ENCODE measurements at regions of chr11 and their contacts with region 1.

Region 1: DNA sequence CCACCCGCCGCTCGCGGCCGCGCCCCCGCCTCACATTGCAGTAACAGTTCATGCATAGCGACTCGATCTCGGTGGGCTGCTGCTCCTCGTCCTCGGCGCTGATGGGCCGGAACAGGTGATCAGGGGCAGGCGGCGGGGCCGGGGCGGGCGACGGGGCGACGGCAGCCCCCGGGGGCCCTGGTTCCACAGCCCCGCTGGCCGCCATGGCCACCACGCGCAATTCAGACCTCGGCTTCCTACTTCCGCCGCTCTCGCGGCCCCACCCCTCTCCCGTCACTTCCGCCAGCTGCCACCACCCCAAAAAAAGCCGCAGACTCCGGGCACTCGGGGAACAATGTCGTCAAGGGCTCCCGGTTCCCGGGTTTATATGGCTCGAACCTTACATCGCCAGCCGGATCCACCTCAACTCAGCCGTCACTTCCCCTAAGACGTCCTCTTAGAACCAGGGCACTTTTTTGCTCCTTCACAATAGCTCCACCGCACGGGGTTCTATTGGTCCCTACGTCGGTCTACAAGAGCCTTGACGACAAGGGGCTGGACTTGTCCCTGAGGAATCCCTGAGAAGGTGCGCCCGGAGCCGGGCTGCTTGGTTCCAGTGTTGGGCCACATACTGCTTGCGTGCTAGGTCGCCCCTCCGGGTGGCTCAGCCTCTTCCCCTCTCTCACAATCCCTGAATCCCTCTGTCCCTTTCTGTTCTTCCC is at the start of gene ZPR1:
- DNase-seq: peak; percentile 56
- ATAC-seq: peak; percentile 88
- H3K4me3 ChIP-seq: peak within 1 kb of the TSS; percentile 67
- H3K27ac ChIP-seq: peak within 1 kb of the TSS; percentile 81
- H3K4me1 ChIP-seq: peaks cover 8% of the 10 kb centered on the region
- H3K27me3 ChIP-seq: no peaks in the 10 kb centered on the region
- CTCF ChIP-seq: no peak
- POLR2A ChIP-seq: peak; percentile 85
- RAD21 ChIP-seq: no peak
- total RNA-seq, gene ZPR1: 52.0 and 53.9 TPM in 2 replicates

Region 2: DNA sequence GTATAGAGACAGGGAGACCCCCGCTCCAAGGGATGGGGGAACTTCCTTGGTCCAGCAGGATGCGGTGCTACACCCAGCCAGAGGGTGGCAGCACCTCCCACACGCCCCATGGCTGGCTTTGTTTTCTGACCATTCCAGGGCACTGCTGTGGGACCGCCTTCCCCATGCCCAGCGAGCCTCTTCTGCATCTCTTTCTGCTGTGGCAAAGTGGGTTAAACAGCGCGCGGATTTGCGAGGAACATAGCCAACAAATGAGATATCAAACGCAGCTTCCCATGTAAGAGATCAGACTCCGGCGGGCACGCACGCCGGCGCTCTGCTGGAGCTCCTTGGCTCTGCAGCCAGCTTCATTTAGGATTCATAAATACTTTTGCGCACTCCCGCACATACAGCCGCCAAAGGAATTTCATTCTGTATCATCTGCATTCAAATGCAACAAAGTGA is 797.9 kb before region 1 on chr11:
- CTCF ChIA-PET with region 1: no interaction called
- POLR2A ChIA-PET with region 1: no interaction called
- dilution Hi-C with region 1: no loop called
- in situ Hi-C with region 1: no loop called
- intact Hi-C with region 1: no loop called
- DNase-seq: no peak
- ATAC-seq: peak; percentile 63
- H3K4me3 ChIP-seq: no peak overlapping the region
- H3K27ac ChIP-seq: no peak overlapping the region
- H3K4me1 ChIP-seq: no peaks in the 10 kb centered on the region
- H3K27me3 ChIP-seq: no peaks in the 10 kb centered on the region
- CTCF ChIP-seq: peak; percentile 28; the same call in 1 of the 2 replicates
- POLR2A ChIP-seq: no peak
- RAD21 ChIP-seq: 0 out of 2 replicates have a peak, but pooled peaks have one; percentile 20

Region 3: GRCh38 chr11:116835791-116836631 is 48.1 kb after region 1 on chr11:
- CTCF ChIA-PET with region 1: interaction called, 30 read pairs
- POLR2A ChIA-PET with region 1: interaction called, 3 read pairs
- dilution Hi-C with region 1: no loop called
- in situ Hi-C with region 1: no loop called
- intact Hi-C with region 1: loop called (anchors 1 kb)
- DNase-seq: peak; percentile 93
- ATAC-seq: peak; percentile 95
- H3K4me3 ChIP-seq: peak overlapping the region; percentile 13; the same call in 1 of the 2 replicates
- H3K27ac ChIP-seq: peak overlapping the region; percentile 3; the same call in 1 of the 2 replicates
- H3K4me1 ChIP-seq: peaks cover 3% of the 10 kb centered on the region; the same call in 1 of the 2 replicates
- H3K27me3 ChIP-seq: peaks cover 3% of the 10 kb centered on the region; the same call in 1 of the 2 replicates
- CTCF ChIP-seq: peak; percentile 67
- POLR2A ChIP-seq: no peak
- RAD21 ChIP-seq: peak; percentile 61

Region 4: GRCh38 chr11:116871248-116871647 is 83.3 kb after region 1 on chr11:
- CTCF ChIA-PET with region 1: no interaction called
- POLR2A ChIA-PET with region 1: no interaction called
- dilution Hi-C with region 1: no loop called
- in situ Hi-C with region 1: no loop called
- intact Hi-C with region 1: loop called (anchors 5 kb)
- DNase-seq: peak; percentile 90
- ATAC-seq: peak; percentile 94
- H3K4me3 ChIP-seq: no peak overlapping the region
- H3K27ac ChIP-seq: peak overlapping the region; percentile 39; the same call in 1 of the 2 replicates
- H3K4me1 ChIP-seq: peaks cover 2% of the 10 kb centered on the region; the same call in 1 of the 2 replicates
- H3K27me3 ChIP-seq: no peaks in the 10 kb centered on the region
- CTCF ChIP-seq: no peak
- POLR2A ChIP-seq: no peak
- RAD21 ChIP-seq: no peak

Region 5: GRCh38 chr11:117107701-117108590 is 320.0 kb after region 1 on chr11:
- CTCF ChIA-PET with region 1: interaction called, 17 read pairs
- POLR2A ChIA-PET with region 1: interaction called, 20 read pairs
- dilution Hi-C with region 1: no loop called
- in situ Hi-C with region 1: loop called (anchors 5 kb)
- intact Hi-C with region 1: loop called (anchors 1 kb)
- DNase-seq: peak; percentile 68
- ATAC-seq: peak; percentile 82
- H3K4me3 ChIP-seq: no peak overlapping the region
- H3K27ac ChIP-seq: no peak overlapping the region
- H3K4me1 ChIP-seq: peaks cover 1% of the 10 kb centered on the region; the same call in 1 of the 2 replicates
- H3K27me3 ChIP-seq: no peaks in the 10 kb centered on the region
- CTCF ChIP-seq: no peak
- POLR2A ChIP-seq: no peak
- RAD21 ChIP-seq: no peak

Region 6: DNA sequence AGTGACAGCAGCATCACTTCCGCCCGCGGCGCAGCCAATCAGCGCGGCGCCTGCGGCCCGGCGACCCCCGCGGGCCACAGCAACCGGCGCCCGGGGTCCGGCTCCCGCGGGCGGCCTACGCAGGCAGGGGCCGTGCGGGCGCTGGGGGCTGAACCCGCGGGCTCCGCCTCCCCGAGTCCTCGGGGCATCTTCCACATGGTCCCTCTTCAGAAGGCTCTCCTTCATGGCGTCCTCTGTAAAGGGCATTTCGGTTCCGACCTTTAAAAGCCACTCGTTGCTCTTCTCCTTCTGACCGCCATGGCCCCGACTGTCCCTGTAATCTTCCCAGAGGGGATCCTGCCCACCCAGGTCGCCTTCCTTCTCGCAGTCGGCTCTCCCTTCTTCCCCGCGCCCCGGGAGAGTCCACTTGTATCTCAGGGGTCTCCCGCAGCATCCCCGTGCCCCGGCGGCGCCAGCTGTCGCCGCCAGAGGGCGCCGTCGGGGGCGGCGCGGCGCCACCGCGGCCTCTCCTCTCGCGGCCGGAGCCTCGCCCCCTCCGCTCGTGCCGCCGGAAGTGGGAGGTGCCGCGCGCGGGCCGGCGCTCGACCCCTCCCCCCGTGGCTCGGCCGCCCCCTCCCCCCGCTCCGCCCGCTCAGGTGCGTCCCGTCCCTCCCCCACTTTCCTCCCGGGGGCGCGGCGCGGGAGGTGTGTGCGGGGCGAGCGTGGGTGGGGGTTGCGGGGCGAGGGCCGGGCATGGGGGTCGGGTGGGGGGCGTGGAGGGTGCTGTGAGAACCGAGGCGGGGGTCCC is 444.3 kb after region 1 on chr11 and contains the start of gene RNF214:
- CTCF ChIA-PET with region 1: no interaction called
- POLR2A ChIA-PET with region 1: no interaction called
- dilution Hi-C with region 1: no loop called
- in situ Hi-C with region 1: loop called (anchors 5 kb)
- intact Hi-C with region 1: no loop called
- DNase-seq: peak; percentile 61
- ATAC-seq: peak; percentile 89
- H3K4me3 ChIP-seq: peak within 1 kb of the TSS; percentile 99
- H3K27ac ChIP-seq: peak within 1 kb of the TSS; percentile 98
- H3K4me1 ChIP-seq: peaks cover 7% of the 10 kb centered on the region
- H3K27me3 ChIP-seq: no peaks in the 10 kb centered on the region
- CTCF ChIP-seq: peak; percentile 95
- POLR2A ChIP-seq: peak; percentile 74
- RAD21 ChIP-seq: peak; percentile 64
- total RNA-seq, gene RNF214: 7.5 and 7.9 TPM in 2 replicates